ENCODE measurements at regions of chr3 and their contacts with region 1.

Region 1: DNA sequence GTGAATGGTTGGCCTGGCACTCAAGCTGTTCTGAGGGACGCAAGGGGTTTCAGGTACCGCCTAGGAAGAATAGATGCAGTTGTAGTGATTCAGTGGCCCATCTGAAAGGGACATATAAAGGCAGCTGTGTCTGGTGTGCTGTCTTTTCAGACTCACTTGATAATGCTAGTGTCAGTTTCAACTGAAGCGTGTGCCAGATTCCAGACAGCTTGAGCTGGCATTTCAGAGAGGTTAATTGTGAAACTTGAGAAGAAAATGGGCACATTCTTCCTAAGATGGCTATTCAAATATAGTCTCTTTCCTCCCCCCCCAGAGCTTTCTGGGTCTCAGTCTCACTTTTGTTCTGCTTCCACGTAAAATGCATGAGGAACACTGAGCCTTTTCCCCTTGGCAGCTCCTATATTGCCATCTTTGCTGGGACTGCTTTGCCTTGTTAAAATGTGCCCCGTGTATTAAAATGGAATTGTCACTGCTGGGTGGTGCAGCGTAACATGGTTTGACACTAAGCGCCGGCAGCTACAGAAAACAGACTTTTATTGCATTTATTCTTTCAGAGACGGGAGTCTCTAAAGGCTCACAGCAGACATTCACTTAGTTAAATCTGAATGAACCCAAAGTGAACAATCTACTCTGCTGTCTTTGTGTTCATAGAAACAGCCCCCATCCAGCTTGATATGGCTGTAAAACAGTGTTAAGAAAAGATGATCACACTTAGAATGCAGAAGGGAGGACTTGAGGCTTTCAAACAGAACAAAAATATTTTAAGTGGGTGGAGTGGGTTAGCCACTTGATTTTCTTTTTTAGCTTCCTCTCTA is 478.7 kb downstream of the RBMS3 start:
- DNase-seq: peak in 1 of 2 donors; percentile 18
- ATAC-seq: peak; percentile 80 to 92 (median 90)
- H3K4me3 ChIP-seq: peak overlapping the region; percentile 45
- H3K27ac ChIP-seq: peak overlapping the region; percentile 78
- H3K4me1 ChIP-seq: peaks cover 49% of the 10 kb centered on the region
- H3K27me3 ChIP-seq: no peaks in the 10 kb centered on the region
- CTCF ChIP-seq: no peak

Region 2: DNA sequence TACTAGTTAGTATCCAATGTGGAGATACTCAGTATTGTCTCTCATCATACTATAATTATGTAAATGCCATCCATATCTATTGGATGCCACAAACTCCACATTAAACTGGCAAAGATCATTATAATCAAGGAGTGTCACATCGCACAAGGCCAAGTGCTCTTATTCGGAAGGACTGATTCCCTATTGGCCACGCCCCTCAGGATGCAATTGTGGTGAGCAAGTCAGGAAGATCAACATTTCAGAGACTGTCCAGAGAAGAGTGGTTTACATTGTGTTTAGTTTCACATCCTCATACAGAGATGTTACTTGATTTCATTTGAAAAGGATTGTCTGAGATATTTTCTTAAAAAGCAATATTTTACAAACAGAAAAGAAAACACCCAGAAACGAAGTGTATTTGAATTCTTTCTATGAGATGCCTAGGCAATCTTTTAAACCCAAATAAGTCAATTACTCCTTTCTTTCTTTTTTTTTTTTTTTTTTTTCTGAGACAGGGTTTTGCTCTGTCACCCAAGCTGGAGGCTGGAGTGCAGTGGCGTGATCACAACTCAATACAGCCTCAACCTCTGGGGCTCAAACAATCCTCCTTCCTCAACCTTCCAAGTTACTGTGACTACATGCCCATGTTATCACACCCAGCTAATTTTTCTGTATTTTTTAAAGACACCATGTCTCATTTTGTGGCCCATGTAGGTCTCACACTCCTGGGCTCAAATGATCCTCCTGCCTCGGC is 109.6 kb before region 1 on chr3:
- intact Hi-C with region 1: loop called (anchors 10 kb)
- DNase-seq: no peak
- ATAC-seq: no peak
- H3K4me3 ChIP-seq: no peak overlapping the region
- H3K27ac ChIP-seq: no peak overlapping the region
- H3K4me1 ChIP-seq: peaks cover 15% of the 10 kb centered on the region
- H3K27me3 ChIP-seq: no peaks in the 10 kb centered on the region
- CTCF ChIP-seq: no peak

Region 3: GRCh38 chr3:30012941-30013543 is 253.4 kb after region 1 on chr3:
- intact Hi-C with region 1: no loop called
- DNase-seq: peak; percentile 45
- ATAC-seq: peak; percentile 36 to 81 (median 62)
- H3K4me3 ChIP-seq: no peak overlapping the region
- H3K27ac ChIP-seq: no peak overlapping the region
- H3K4me1 ChIP-seq: peaks cover 3% of the 10 kb centered on the region
- H3K27me3 ChIP-seq: no peaks in the 10 kb centered on the region
- CTCF ChIP-seq: peak; percentile 68

Measured in psoas muscle (tissue), 8 donors.